ENCODE measurements at regions of chr13 and their contacts with region 1.

Region 1: DNA sequence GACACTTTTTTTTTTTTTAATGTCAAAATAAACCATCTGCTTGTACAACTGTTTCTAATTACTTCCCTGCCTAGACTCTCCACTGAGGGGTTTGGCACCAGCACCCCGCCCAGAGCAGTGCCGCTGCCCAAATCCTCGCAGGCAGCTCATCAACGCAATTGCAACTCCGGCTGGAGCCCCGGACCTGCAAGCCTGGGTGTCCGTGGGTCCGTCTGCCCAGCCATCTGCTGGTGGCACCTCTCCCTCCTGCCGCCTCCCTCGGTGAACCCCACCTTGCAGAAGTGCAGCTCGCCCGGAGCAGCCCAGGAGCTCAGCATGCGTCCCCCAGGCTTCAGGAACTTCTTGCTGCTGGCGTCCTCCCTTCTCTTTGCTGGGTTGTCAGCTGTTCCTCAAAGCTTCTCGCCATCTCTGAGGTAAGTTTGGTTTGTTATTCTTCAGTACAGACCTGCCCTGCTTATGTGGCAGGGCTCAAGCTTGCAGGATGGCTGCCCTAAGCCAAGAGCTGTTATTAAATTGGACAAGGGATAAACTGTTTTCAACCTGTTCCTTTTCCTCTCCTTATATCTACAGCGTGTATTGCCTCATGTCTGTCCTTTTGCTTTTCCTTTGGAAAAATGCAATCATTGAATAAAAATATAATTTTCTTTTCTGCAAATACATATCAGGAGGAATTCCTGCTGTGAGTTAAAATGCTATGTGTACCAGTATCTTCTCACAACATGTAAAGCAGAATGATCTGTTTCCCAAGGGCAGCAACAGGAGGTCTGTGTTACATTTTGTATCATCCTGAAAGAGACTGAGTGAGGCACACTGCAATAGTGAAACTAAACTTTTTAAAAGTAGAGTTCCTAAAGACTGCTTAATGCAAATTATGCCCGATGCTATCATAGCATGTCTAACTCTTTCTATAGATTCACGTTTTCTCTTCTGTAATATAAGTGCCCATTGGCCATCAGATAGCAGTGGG is at the start of gene ITGBL1:
- DNase-seq: peak; percentile 41
- ATAC-seq: peak; percentile 12
- H3K4me3 ChIP-seq: peak within 1 kb of the TSS; percentile 85
- H3K27ac ChIP-seq: peak within 1 kb of the TSS; percentile 99
- H3K4me1 ChIP-seq: peaks cover 60% of the 10 kb centered on the region
- H3K27me3 ChIP-seq: no peaks in the 10 kb centered on the region
- CTCF ChIP-seq: no peak
- total RNA-seq, gene ITGBL1: 37.1 and 42.0 TPM in 2 replicates

Region 2: DNA sequence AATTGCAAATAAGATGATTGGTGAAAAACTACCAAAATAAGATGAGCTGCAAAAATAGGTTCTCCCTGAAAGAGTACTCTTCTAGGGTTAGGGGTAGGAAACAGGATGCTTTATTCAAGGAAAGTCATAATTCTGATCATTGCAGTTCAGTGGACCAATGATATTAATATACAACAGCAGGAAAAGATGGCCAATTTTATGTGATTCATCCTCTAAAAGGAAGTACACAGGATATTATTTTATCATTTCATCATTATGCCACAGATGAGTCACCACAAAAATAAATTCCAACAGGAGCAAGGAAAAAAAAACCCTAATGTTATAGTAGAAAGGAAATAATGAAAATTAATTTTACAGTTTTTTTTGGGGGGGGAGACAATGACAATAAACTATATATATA is 241.5 kb before region 1 on chr13:
- CTCF ChIA-PET with region 1: no interaction called
- POLR2A ChIA-PET with region 1: no interaction called
- intact Hi-C with region 1: loop called (anchors 1 kb)
- DNase-seq: peak; percentile 76
- ATAC-seq: peak; percentile 82
- H3K4me3 ChIP-seq: no peak overlapping the region
- H3K27ac ChIP-seq: peak overlapping the region; percentile 51
- H3K4me1 ChIP-seq: peaks cover 35% of the 10 kb centered on the region
- H3K27me3 ChIP-seq: no peaks in the 10 kb centered on the region
- CTCF ChIP-seq: no peak

Region 3: DNA sequence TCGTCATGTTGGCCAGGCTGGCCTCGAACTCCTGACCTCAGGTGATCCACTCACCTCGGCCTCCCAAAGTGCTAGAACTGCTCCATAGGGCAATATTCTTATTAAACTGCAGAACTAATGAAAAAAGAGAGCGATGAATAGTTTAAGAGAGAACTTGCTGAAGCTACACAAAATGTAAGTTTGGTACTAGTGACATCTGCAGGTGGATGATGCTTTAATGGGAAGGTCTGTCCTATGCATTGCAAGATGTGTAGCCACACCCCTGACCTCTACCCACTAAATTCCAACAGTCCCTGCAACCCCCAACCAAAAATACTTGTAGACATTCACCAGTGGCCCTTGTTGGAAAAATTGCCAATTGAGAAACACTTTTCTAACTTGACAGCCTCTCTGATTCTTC is 154.3 kb before region 1 on chr13:
- CTCF ChIA-PET with region 1: no interaction called
- POLR2A ChIA-PET with region 1: no interaction called
- intact Hi-C with region 1: loop called (anchors 5 kb)
- DNase-seq: peak; percentile 38
- ATAC-seq: peak; percentile 64; the same call in 1 of the 2 replicates
- H3K4me3 ChIP-seq: no peak overlapping the region
- H3K27ac ChIP-seq: no peak overlapping the region
- H3K4me1 ChIP-seq: no peaks in the 10 kb centered on the region
- H3K27me3 ChIP-seq: no peaks in the 10 kb centered on the region
- CTCF ChIP-seq: peak; percentile 27

Region 4: GRCh38 chr13:101433895-101434294 is 18.9 kb before region 1 on chr13:
- CTCF ChIA-PET with region 1: no interaction called
- POLR2A ChIA-PET with region 1: no interaction called
- intact Hi-C with region 1: no loop called
- DNase-seq: peak; percentile 23
- ATAC-seq: peak; percentile 63; the same call in 1 of the 2 replicates
- H3K4me3 ChIP-seq: no peak overlapping the region
- H3K27ac ChIP-seq: no peak overlapping the region
- H3K4me1 ChIP-seq: no peaks in the 10 kb centered on the region
- H3K27me3 ChIP-seq: no peaks in the 10 kb centered on the region
- CTCF ChIP-seq: no peak

Region 5: GRCh38 chr13:101499406-101499805 is 46.6 kb after region 1 on chr13:
- CTCF ChIA-PET with region 1: no interaction called
- POLR2A ChIA-PET with region 1: no interaction called
- intact Hi-C with region 1: loop called (anchors 1 kb)
- DNase-seq: peak; percentile 89
- ATAC-seq: peak; percentile 93
- H3K4me3 ChIP-seq: peak overlapping the region; percentile 66
- H3K27ac ChIP-seq: peak overlapping the region; percentile 92
- H3K4me1 ChIP-seq: peaks cover 52% of the 10 kb centered on the region
- H3K27me3 ChIP-seq: no peaks in the 10 kb centered on the region
- CTCF ChIP-seq: no peak

Region 6: DNA sequence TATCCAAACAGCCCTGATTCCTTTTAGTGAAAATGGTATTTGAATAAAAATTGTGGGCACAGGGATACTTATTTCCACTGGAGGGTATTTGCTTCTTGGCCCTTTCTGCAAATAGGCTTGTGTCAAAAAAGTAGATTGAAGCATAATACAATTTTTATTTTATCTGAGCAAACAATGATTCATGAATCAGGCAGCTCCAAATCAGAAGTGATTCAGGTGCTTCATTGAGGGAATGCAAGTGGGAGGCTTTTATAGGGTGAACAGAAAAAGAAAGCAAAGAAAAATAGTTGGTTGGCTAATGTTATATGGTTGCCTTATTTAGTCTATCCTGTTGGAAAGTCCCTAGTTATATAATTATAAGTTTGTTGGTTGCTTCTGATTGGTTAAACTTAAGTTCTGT is 117.6 kb after region 1 on chr13:
- CTCF ChIA-PET with region 1: no interaction called
- POLR2A ChIA-PET with region 1: no interaction called
- intact Hi-C with region 1: loop called (anchors 1 kb)
- DNase-seq: peak; percentile 86
- ATAC-seq: peak; percentile 92
- H3K4me3 ChIP-seq: peak overlapping the region; percentile 10; the same call in 1 of the 2 replicates
- H3K27ac ChIP-seq: peak overlapping the region; percentile 85
- H3K4me1 ChIP-seq: peaks cover 40% of the 10 kb centered on the region
- H3K27me3 ChIP-seq: no peaks in the 10 kb centered on the region
- CTCF ChIP-seq: no peak

Region 7: GRCh38 chr13:101757446-101758039 is 304.7 kb after region 1 on chr13:
- CTCF ChIA-PET with region 1: no interaction called
- POLR2A ChIA-PET with region 1: no interaction called
- intact Hi-C with region 1: loop called (anchors 5 kb)
- DNase-seq: peak; percentile 70
- ATAC-seq: peak; percentile 84
- H3K4me3 ChIP-seq: no peak overlapping the region
- H3K27ac ChIP-seq: no peak overlapping the region
- H3K4me1 ChIP-seq: peaks cover 10% of the 10 kb centered on the region
- H3K27me3 ChIP-seq: no peaks in the 10 kb centered on the region
- CTCF ChIP-seq: peak; percentile 68

Measured in PC-3 (cell line).